ENCODE measurements at regions of chr4 and their contacts with region 1.

Region 1: DNA sequence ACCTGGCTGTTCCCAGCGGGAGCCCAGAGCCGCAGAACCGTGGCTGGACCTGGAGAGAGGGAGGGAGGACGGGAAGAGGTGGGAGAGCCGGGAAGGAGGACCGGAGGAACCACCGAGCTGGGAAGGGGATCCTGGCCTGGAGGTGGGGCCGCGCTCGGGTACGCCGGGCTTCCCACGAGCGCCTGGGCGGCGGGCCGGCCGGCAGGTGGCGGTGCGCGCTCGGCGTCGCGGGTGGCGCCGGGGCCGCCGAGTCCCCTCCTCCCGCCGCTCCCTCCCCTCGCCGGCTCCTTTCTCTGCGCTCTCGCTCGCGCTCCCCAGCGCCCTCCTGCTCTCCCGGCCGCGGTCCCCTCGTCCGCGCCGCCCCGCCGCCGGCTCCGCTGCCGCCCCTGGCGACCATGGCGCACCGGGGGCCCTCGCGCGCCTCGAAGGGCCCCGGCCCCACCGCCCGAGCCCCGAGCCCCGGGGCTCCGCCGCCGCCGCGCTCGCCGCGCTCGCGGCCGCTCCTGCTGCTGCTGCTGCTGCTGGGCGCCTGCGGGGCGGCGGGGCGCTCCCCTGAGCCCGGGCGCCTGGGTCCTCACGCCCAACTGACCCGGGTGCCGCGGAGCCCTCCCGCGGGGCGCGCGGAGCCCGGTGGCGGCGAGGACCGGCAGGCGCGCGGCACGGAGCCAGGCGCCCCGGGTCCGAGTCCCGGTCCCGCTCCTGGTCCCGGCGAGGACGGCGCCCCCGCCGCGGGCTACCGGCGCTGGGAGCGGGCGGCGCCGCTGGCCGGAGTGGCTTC is at the start of gene SORCS2:
- DNase-seq: peak; percentile 66 to 68
- ATAC-seq: peak; percentile 78 to 96 (median 96)
- H3K4me3 ChIP-seq: no peak within 1 kb of the TSS
- H3K4me3 Mint-ChIP-seq: peak within 1 kb of the TSS; percentile 56
- H3K27ac ChIP-seq: no peak within 1 kb of the TSS
- H3K27ac Mint-ChIP-seq: no peak within 1 kb of the TSS
- H3K4me1 ChIP-seq: peaks cover 9% of the 10 kb centered on the region
- H3K4me1 Mint-ChIP-seq: no peaks in the 10 kb centered on the region
- H3K27me3 ChIP-seq: peaks cover 29% of the 10 kb centered on the region
- H3K27me3 Mint-ChIP-seq: peaks cover 42 to 46% of the 10 kb centered on the region in 2 donors
- CTCF ChIP-seq: peak; percentile 66
- total RNA-seq, gene SORCS2: 1.2 to 2.5 (median 1.4) TPM

Region 2: GRCh38 chr4:7335344-7336069 is 143.1 kb after region 1 on chr4:
- intact Hi-C with region 1: loop called (anchors 2 kb)
- DNase-seq: peak; percentile 64 to 66
- ATAC-seq: peak in 2 of 3 donors; percentile 95 to 98
- H3K4me3 ChIP-seq: no peak overlapping the region
- H3K4me3 Mint-ChIP-seq: no peak overlapping the region
- H3K27ac ChIP-seq: no peak overlapping the region
- H3K27ac Mint-ChIP-seq: no peak overlapping the region
- H3K4me1 ChIP-seq: no peaks in the 10 kb centered on the region
- H3K4me1 Mint-ChIP-seq: peaks cover 0 to 4% of the 10 kb centered on the region in 2 donors
- H3K27me3 ChIP-seq: no peaks in the 10 kb centered on the region
- H3K27me3 Mint-ChIP-seq: peaks cover 12 to 19% of the 10 kb centered on the region in 2 donors
- CTCF ChIP-seq: peak; percentile 64

Region 3: GRCh38 chr4:7719354-7720174 is 527.1 kb after region 1 on chr4:
- intact Hi-C with region 1: loop called (anchors 1 kb)
- DNase-seq: peak; percentile 69 to 71
- ATAC-seq: peak; percentile 58 to 86 (median 79)
- H3K4me3 ChIP-seq: no peak overlapping the region
- H3K4me3 Mint-ChIP-seq: no peak overlapping the region
- H3K27ac ChIP-seq: no peak overlapping the region
- H3K27ac Mint-ChIP-seq: no peak overlapping the region
- H3K4me1 ChIP-seq: peaks cover 7% of the 10 kb centered on the region
- H3K4me1 Mint-ChIP-seq: peaks cover 24 to 42% of the 10 kb centered on the region in 2 donors
- H3K27me3 ChIP-seq: peaks cover 7% of the 10 kb centered on the region
- H3K27me3 Mint-ChIP-seq: peaks cover 18 to 20% of the 10 kb centered on the region in 2 donors
- CTCF ChIP-seq: peak; percentile 94

Region 4: DNA sequence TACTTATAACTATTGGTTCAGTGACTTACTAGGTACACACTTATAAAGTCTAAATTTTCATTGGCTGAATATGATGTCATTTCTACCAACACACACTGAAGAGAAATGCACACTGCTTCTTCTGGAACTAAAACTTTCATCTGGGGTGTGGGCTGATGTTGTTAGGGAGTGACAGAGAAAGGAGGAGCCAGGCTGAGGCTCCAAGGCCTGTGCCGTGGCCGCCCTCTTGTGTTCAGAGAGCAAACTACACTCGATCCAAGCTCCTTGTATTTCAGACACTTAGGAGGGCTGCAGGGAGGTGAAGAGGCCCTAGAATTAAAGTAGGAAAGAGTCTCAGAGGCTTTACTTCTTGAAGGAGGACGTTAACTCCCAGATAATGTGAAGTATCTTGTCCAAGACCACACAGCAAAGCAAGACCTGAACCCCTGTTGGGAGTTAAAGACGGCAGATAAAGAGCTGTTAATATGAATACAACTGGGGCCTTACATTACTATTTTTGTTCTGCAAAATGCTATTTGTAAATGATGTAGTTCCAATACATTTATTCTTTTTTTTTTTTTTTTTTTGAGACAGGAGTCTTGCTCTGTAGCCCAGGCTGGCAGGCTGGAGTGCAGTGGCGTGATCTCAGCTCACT is 609.8 kb after region 1 on chr4:
- intact Hi-C with region 1: loop called (anchors 1 kb)
- DNase-seq: peak; percentile 69 to 86
- ATAC-seq: peak; percentile 83 to 98 (median 94)
- H3K4me3 ChIP-seq: no peak overlapping the region
- H3K4me3 Mint-ChIP-seq: no peak overlapping the region
- H3K27ac ChIP-seq: no peak overlapping the region
- H3K27ac Mint-ChIP-seq: no peak overlapping the region
- H3K4me1 ChIP-seq: no peaks in the 10 kb centered on the region
- H3K4me1 Mint-ChIP-seq: peaks cover 6% of the 10 kb centered on the region in 2 donors
- H3K27me3 ChIP-seq: no peaks in the 10 kb centered on the region
- H3K27me3 Mint-ChIP-seq: peaks cover 0 to 19% of the 10 kb centered on the region in 2 donors
- CTCF ChIP-seq: peak; percentile 81

Region 5: GRCh38 chr4:7987148-7987989 is 794.9 kb after region 1 on chr4:
- intact Hi-C with region 1: loop called (anchors 10 kb)
- DNase-seq: peak; percentile 74 to 89
- ATAC-seq: peak; percentile 72 to 94 (median 89)
- H3K4me3 ChIP-seq: no peak overlapping the region
- H3K4me3 Mint-ChIP-seq: no peak overlapping the region
- H3K27ac ChIP-seq: no peak overlapping the region
- H3K27ac Mint-ChIP-seq: no peak overlapping the region
- H3K4me1 ChIP-seq: peaks cover 12% of the 10 kb centered on the region
- H3K4me1 Mint-ChIP-seq: peaks cover 6 to 15% of the 10 kb centered on the region in 2 donors
- H3K27me3 ChIP-seq: no peaks in the 10 kb centered on the region
- H3K27me3 Mint-ChIP-seq: peaks cover 6 to 7% of the 10 kb centered on the region in 2 donors
- CTCF ChIP-seq: peak; percentile 88

Measured in natural killer cell (primary cell).